ENCODE measurements at regions of chr1 and their contacts with region 1.

Region 1: DNA sequence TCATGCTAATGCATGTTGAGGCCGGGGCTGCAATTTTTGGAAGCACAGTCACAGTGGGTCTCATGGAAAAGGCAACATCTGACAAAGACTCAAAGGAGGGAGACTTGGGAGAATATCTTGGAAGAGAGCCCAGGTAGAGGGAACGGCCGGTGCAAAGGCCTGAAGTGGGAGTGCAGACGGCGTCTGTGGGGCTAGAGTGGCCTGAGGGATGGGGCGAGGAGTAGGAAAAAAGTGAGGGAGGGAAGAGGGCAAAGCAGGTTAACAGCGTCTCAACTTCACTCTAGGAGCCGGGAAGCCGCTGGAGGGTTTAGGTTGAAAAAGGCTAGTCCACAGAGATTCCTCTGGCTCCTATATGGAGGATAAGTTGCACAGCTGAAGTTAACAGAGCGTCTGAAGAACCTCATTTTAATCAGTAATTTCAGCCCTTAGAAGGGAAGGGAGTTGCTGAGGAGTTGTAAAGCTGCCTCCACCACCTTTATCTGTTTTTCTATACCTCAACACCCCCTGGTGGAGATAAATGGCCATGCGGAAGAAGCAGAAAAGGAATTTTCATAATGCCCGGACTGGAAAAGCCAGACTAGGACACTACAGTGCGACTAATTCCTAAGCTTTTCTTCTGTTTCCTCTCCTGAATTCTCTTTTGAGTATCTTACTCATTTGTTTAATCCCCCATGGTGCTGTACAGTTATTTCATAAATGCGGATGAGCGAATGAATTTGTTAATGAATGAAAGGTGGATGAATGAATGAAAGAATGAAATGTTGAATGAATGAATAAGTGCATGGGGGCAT is 78.7 kb upstream of the ZNF281 start:
- DNase-seq: peak; percentile 75
- ATAC-seq: peak; percentile 92
- H3K4me3 ChIP-seq: peak overlapping the region in 1 of 2 experiments; percentile 38; a peak in 2 of 4 replicates
- H3K27ac ChIP-seq: peak overlapping the region; percentile 69
- H3K4me1 ChIP-seq: peaks cover 16% of the 10 kb centered on the region
- H3K27me3 ChIP-seq: no peaks in the 10 kb centered on the region
- CTCF ChIP-seq: peak; percentile 84

Region 2: GRCh38 chr1:200139661-200140250 is 348.8 kb before region 1 on chr1:
- CTCF ChIA-PET with region 1: no interaction called
- POLR2A ChIA-PET with region 1: no interaction called
- in situ Hi-C with region 1: no loop called
- intact Hi-C with region 1: loop called (anchors 5 kb)
- DNase-seq: peak; percentile 50
- ATAC-seq: peak; percentile 97
- H3K4me3 ChIP-seq: no peak overlapping the region
- H3K27ac ChIP-seq: no peak overlapping the region
- H3K4me1 ChIP-seq: no peaks in the 10 kb centered on the region
- H3K27me3 ChIP-seq: no peaks in the 10 kb centered on the region
- CTCF ChIP-seq: peak; percentile 84

Region 3: GRCh38 chr1:200302192-200302920 is 186.2 kb before region 1 on chr1:
- CTCF ChIA-PET with region 1: no interaction called
- POLR2A ChIA-PET with region 1: no interaction called
- in situ Hi-C with region 1: no loop called
- intact Hi-C with region 1: loop called (anchors 10 kb)
- DNase-seq: no peak
- ATAC-seq: peak; percentile 84
- H3K4me3 ChIP-seq: peak overlapping the region; percentile 70 to 85
- H3K27ac ChIP-seq: peak overlapping the region; percentile 70
- H3K4me1 ChIP-seq: peaks cover 7% of the 10 kb centered on the region; the same call in 1 of the 2 replicates
- H3K27me3 ChIP-seq: no peaks in the 10 kb centered on the region
- CTCF ChIP-seq: no peak; the same call in 1 of the 2 replicates

Region 4: GRCh38 chr1:200409761-200410565 is 78.6 kb before region 1 on chr1 and contains the start of gene ZNF281:
- CTCF ChIA-PET with region 1: no interaction called
- POLR2A ChIA-PET with region 1: interaction called, 4 read pairs
- in situ Hi-C with region 1: no loop called
- intact Hi-C with region 1: loop called (anchors 2 kb)
- DNase-seq: no peak
- ATAC-seq: peak; percentile 94
- H3K4me3 ChIP-seq: peak within 1 kb of the TSS; percentile 77 to 90
- H3K27ac ChIP-seq: peak within 1 kb of the TSS; percentile 87
- H3K4me1 ChIP-seq: peaks cover 61% of the 10 kb centered on the region
- H3K27me3 ChIP-seq: no peaks in the 10 kb centered on the region
- CTCF ChIP-seq: no peak
- total RNA-seq, gene ZNF281: 34.2 TPM

Region 5: DNA sequence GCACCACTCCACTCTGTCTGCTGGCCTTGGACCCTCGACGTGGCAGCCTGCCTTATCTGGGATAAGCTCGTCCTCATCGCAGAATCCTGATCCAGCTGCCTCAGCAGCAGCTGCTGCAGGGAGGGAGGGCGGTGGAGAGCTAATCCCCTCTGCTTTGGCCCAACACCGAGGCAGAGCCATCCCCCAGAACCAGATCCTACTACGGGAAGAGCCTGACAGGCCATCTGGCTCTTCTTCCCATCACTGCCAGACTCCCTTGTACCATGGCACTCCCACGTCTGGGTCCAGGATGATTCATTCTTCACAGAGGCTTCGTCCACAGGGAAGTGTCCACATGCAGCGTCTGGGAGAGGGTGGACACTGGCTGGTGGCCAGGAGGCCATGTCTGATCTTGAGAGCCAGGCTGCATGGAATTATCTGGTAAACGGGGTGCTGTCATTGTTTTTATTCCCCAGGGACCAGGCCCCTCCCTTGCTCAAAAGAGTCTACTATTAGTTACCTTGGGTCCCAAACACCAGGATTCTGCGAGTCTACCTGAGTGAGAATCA is 780.1 kb after region 1 on chr1:
- CTCF ChIA-PET with region 1: no interaction called
- POLR2A ChIA-PET with region 1: no interaction called
- in situ Hi-C with region 1: no loop called
- intact Hi-C with region 1: no loop called
- DNase-seq: no peak
- ATAC-seq: no peak
- H3K4me3 ChIP-seq: no peak overlapping the region
- H3K27ac ChIP-seq: no peak overlapping the region
- H3K4me1 ChIP-seq: no peaks in the 10 kb centered on the region
- H3K27me3 ChIP-seq: peaks cover 4% of the 10 kb centered on the region; the same call in 1 of the 2 replicates
- CTCF ChIP-seq: no peak

Measured in Panc1 (cell line).